Heart right ventricle (tissue), 16 donors: ENCODE measurements at regions of chr1 and their contacts with region 1.

Region 1: DNA sequence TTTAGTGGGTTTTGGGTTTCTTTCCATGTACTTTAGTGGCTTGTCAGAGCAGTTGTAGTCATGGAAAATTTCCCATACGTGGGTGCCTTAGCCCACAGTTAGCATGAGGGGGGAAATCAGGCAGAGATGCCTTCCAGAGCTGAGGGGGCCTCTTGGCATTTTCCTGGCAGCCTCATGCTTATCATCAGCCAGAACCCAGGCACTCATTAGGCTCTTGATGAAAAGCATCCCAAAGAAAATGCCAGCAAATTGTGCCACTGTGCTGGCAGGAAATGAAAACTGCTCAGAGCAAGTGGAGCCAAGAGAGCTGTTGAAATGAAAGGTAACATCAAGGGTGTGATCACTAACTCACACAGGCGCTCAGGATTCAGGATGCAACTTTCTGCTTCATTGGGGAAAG is 128.0 kb downstream of the TNNI3K start:
- DNase-seq: peak; percentile 32 to 75
- ATAC-seq: peak; percentile 80 to 99 (median 94)
- H3K4me3 ChIP-seq: no peak overlapping the region
- H3K27ac ChIP-seq: peak overlapping the region; percentile 15 to 85 (median 72)
- H3K4me1 ChIP-seq: peaks cover 0 to 14% (median 0%) of the 10 kb centered on the region in 9 donors
- H3K27me3 ChIP-seq: no peaks in the 10 kb centered on the region
- CTCF ChIP-seq: no peak

Region 2: DNA sequence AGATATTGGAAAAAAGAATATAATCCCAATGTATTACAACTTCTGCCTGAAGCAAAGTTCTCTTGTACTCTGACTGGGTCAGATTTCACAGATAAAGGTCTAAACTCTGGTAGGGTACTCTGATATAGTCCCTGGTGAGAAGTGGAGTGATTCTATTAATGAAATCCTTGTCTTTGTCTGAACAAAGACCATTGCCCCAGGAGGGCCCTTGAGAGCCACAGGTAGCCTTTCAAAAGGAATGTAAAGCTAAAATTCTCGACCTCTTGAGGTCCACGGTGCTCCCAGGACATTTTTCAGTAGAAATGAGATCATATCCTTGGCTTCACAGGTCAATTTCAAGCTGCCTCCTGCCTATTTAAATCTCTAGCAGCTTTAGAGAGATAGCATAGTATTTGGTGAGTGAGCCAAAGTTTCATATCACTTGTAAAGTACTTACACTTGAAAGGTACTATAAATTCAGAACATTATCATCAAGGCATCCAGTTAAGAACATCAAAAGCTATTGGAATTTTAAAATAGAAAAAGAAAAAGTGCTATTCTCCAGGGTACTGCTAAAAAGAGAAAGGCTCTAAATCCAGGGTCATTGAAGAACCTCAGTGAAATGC is 118.0 kb before region 1 on chr1:
- intact Hi-C with region 1: loop called in 1 of 10 experiments (anchors 10 kb)
- DNase-seq: no peak
- ATAC-seq: peak in 5 of 8 donors; percentile 35 to 72 (median 60)
- H3K4me3 ChIP-seq: no peak overlapping the region
- H3K27ac ChIP-seq: peak overlapping the region in 9 of 10 donors; percentile 18 to 76 (median 56)
- H3K4me1 ChIP-seq: peaks cover 0 to 37% (median 11%) of the 10 kb centered on the region in 9 donors
- H3K27me3 ChIP-seq: no peaks in the 10 kb centered on the region
- CTCF ChIP-seq: no peak

Region 3: DNA sequence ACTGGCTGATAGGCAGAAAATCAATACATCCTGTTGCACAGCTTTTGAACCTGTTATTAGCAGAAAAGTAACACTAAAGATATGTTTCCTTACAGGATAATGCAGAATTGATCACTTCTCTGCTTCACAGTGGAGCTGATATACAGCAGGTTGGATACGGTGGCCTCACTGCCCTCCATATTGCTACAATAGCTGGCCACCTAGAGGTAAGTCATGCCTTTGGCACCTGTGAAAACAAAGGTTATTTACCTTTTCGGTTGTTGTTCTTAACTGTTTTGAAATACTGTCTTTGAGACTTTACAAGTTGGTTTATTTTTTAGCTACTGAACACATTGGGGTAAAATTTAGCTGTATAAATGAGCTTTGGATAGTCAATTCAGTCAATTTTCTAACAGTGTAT is 91.7 kb before region 1 on chr1:
- intact Hi-C with region 1: no loop called
- DNase-seq: no peak
- ATAC-seq: no peak
- H3K4me3 ChIP-seq: no peak overlapping the region
- H3K27ac ChIP-seq: no peak overlapping the region
- H3K4me1 ChIP-seq: peaks cover 0 to 9% (median 0%) of the 10 kb centered on the region in 9 donors
- H3K27me3 ChIP-seq: no peaks in the 10 kb centered on the region
- CTCF ChIP-seq: no peak

Region 4: DNA sequence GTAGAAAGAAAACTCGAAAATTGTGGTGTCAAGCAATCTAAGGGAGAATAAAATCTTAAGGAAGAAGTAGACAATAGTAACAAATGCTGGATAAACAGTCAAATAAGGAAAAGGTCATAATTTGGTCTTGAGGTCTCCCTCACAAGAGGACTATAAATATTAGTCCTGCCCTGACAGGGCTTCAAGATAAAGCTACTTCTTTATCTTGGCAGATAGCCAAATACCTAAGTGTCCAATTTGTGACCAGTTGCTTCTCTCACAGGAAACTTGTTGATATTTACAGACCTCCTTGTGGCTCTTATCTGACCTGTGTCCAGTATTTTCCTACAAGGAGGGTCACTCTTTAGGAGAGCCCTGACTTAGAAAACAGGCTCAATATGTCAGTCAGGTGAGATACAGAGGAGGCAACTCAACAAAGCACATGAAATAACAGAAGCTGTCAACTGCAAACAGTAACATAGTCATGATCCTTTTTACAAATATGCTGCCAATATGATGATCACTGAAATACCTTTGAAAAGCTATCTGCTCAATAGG is 39.2 kb before region 1 on chr1:
- intact Hi-C with region 1: no loop called
- DNase-seq: no peak
- ATAC-seq: peak in 5 of 8 donors; percentile 57 to 82 (median 60)
- H3K4me3 ChIP-seq: no peak overlapping the region
- H3K27ac ChIP-seq: peak overlapping the region in 6 of 10 donors; percentile 8 to 45 (median 33)
- H3K4me1 ChIP-seq: peaks cover 0 to 22% (median 17%) of the 10 kb centered on the region in 9 donors
- H3K27me3 ChIP-seq: no peaks in the 10 kb centered on the region
- CTCF ChIP-seq: no peak

Region 5: GRCh38 chr1:74334147-74334546 is 29.1 kb before region 1 on chr1:
- intact Hi-C with region 1: no loop called
- DNase-seq: no peak
- ATAC-seq: no peak
- H3K4me3 ChIP-seq: no peak overlapping the region
- H3K27ac ChIP-seq: no peak overlapping the region
- H3K4me1 ChIP-seq: peaks cover 0 to 2% (median 0%) of the 10 kb centered on the region in 9 donors
- H3K27me3 ChIP-seq: no peaks in the 10 kb centered on the region
- CTCF ChIP-seq: no peak

Region 6: GRCh38 chr1:74412244-74412643 is 49.0 kb after region 1 on chr1:
- intact Hi-C with region 1: no loop called
- DNase-seq: no peak
- ATAC-seq: no peak
- H3K4me3 ChIP-seq: no peak overlapping the region
- H3K27ac ChIP-seq: no peak overlapping the region
- H3K4me1 ChIP-seq: peaks cover 0 to 15% (median 0%) of the 10 kb centered on the region in 9 donors
- H3K27me3 ChIP-seq: no peaks in the 10 kb centered on the region
- CTCF ChIP-seq: no peak